ENCODE measurements at regions of chr3 and their contacts with region 1.

Region 1: GRCh38 chr3:185677146-185677829 is 91.2 kb downstream of the SENP2 start:
- DNase-seq: no peak
- ATAC-seq: no peak
- H3K4me3 Mint-ChIP-seq: no peak overlapping the region
- H3K27ac Mint-ChIP-seq: no peak overlapping the region
- H3K4me1 Mint-ChIP-seq: no peaks in the 10 kb centered on the region
- H3K27me3 Mint-ChIP-seq: peaks cover 23% of the 10 kb centered on the region

Region 2: DNA sequence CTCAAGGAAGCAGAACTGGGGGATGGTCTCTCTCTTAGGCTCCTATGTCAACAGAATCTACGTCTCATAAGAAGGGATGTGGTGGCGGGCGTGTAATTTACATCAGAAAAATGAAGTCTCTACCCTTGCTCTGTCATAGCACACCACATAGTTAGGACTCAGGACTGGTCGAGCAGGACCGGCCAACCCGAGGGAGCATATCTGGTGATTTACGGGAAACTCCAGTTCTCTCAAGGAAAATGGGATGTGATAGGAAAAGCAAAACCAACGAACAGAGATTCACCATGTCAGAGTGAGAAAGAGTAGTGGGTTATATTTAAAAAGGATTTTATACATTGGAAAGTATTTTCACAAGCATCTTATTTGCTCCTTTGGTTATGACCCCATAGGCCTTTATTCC is 92.8 kb after region 1 on chr3:
- CTCF ChIA-PET with region 1: interaction called, 19 read pairs
- POLR2A ChIA-PET with region 1: interaction called, 3 read pairs
- intact Hi-C with region 1: loop called (anchors 1 kb)
- DNase-seq: no peak
- ATAC-seq: no peak
- H3K4me3 Mint-ChIP-seq: no peak overlapping the region
- H3K27ac Mint-ChIP-seq: no peak overlapping the region
- H3K4me1 Mint-ChIP-seq: peaks cover 6% of the 10 kb centered on the region
- H3K27me3 Mint-ChIP-seq: peaks cover 5% of the 10 kb centered on the region

Measured in activated CD4-positive, alpha-beta T cell treated with anti-CD3 and anti-CD28 coated beads for 36 hours (primary cell).